ENCODE measurements at regions of chr5 and their contacts with region 1.

Region 1: DNA sequence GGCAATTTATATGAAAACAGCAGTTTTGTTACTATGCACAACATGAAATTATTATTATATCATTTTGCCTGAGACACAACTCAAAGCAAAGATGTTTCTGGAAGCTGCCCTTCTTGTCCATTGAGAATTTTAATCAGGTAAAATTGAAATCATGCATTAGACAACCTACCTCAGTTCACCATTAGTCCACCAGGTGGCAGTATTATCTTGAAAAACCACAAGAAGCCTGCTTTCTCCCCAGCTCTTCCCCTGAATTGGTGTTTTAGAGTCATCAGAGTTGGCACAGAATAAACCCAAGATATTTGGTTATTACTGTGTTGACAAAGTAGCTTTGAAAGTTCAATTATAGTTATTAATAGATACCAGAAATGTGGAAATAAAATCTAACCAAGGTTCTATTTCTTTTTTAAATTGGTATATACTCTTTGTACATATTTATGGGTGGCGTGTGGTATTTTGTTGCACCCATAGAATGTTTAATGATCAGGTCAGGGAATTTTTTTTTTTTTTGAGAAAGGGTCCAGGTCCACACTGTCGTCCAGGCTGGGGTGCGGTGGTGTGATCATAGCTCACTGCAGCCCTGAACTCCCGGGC is 25.7 kb downstream of the UTP15 start:
- DNase-seq: peak; percentile 84
- H3K4me3 ChIP-seq: no peak overlapping the region
- H3K27ac ChIP-seq: no peak overlapping the region
- H3K27me3 ChIP-seq: no peaks in the 10 kb centered on the region
- CTCF ChIP-seq: peak; percentile 68

Region 2: DNA sequence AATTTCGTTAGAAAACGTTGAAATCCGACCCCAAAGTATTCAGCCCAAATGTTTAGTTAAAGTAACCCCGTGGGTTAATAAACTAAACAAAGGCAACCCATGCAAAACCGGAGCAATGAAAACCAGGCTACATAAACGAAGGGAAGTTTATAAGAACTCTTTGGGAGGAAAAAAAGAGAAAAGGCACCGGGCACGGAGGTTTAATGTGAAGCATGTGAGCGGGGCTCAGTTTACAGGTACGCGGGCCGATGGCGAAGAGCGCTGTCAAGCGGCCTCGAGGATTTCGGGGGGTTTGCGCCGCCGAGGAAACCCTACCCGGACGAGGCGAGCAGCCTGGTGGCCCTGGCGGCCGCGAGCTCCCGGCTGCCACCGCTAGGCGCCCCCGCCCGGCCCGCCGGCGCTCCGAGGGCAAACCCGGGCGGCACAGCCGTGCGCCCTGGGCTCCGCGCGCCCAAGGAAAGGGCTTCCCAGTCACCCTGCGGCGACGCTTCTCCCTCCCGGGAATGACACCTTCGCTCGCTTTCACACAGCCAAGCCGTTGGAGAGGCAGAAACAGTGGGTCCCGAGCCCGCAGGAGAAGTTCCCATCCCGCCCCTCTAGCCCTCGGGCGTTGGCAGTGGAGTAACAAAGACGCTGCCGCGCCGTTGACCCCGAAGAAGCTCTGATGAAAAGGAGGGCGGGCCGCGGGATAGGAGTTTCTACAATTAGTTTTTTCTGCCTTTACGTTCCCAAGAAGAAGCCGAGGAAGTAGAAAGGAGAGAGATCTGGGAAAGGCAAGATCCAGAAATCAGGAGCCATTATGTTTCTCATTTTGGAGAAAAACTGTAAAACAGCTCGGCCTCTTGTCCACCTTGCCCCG is 292.2 kb before region 1 on chr5:
- in situ Hi-C with region 1: no loop called
- DNase-seq: no peak
- H3K4me3 ChIP-seq: peak overlapping the region; percentile 31
- H3K27ac ChIP-seq: no peak overlapping the region
- H3K27me3 ChIP-seq: no peaks in the 10 kb centered on the region
- CTCF ChIP-seq: no peak

Region 3: GRCh38 chr5:73792687-73793320 is 201.6 kb after region 1 on chr5:
- in situ Hi-C with region 1: loop called (anchors 25 kb)
- DNase-seq: peak; percentile 80
- H3K4me3 ChIP-seq: no peak overlapping the region
- H3K27ac ChIP-seq: no peak overlapping the region
- H3K27me3 ChIP-seq: no peaks in the 10 kb centered on the region
- CTCF ChIP-seq: peak; percentile 96